HepG2 (cell line): ENCODE measurements at regions of chr12 and their contacts with region 1.

Region 1: GRCh38 chr12:85155787-85156186 is 119.6 kb downstream of the LRRIQ1 start:
- DNase-seq: peak; percentile 4
- ATAC-seq: no peak
- H3K4me3 ChIP-seq: no peak overlapping the region
- H3K27ac ChIP-seq: no peak overlapping the region
- H3K4me1 ChIP-seq: no peaks in the 10 kb centered on the region
- H3K27me3 ChIP-seq: no peaks in the 10 kb centered on the region
- CTCF ChIP-seq: no peak; the same call in 1 of the 2 replicates
- EP300 ChIP-seq: no peak
- POLR2A ChIP-seq: no peak
- RAD21 ChIP-seq: no peak

Region 2: GRCh38 chr12:85182699-85183098 is 26.9 kb after region 1 on chr12:
- CTCF ChIA-PET with region 1: no interaction called
- POLR2A ChIA-PET with region 1: no interaction called
- in situ Hi-C with region 1: no loop called
- intact Hi-C with region 1: no loop called
- DNase-seq: no peak
- ATAC-seq: no peak
- H3K4me3 ChIP-seq: no peak overlapping the region
- H3K27ac ChIP-seq: no peak overlapping the region
- H3K4me1 ChIP-seq: no peaks in the 10 kb centered on the region
- H3K27me3 ChIP-seq: no peaks in the 10 kb centered on the region; a peak in 1 of 5 replicates
- CTCF ChIP-seq: no peak
- EP300 ChIP-seq: no peak
- POLR2A ChIP-seq: no peak
- RAD21 ChIP-seq: no peak

Region 3: GRCh38 chr12:85413266-85413665 is 257.5 kb after region 1 on chr12:
- CTCF ChIA-PET with region 1: no interaction called
- POLR2A ChIA-PET with region 1: no interaction called
- in situ Hi-C with region 1: no loop called
- intact Hi-C with region 1: no loop called
- DNase-seq: no peak
- ATAC-seq: no peak
- H3K4me3 ChIP-seq: no peak overlapping the region
- H3K27ac ChIP-seq: no peak overlapping the region
- H3K4me1 ChIP-seq: no peaks in the 10 kb centered on the region
- H3K27me3 ChIP-seq: no peaks in the 10 kb centered on the region
- CTCF ChIP-seq: no peak
- EP300 ChIP-seq: no peak
- POLR2A ChIP-seq: no peak
- RAD21 ChIP-seq: no peak

Region 4: DNA sequence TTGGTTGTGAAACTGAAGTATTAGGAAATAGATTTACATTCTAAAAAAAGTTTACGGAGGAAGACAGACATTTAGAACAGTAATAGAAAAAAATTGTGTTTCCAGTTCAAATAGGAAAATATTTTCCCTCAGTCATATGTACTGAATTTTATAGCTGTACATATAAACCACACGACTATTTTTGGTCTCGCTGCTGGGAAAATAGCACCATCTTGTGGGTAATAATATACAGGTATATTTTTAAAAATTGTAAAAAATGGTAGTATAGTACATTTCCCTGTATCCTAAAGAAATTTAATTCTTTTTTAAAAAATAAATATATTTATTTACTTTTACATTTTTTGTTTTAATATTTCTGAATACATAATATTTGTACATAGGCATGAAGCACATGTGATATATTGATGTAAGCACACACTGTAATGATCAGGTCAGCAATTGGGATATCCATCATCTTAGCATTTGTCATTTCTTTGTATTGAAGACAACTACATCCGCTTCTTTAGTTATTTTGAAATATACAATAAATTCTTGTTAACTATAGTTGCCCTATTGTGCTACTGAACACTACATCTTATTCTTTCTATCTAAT is 292.9 kb after region 1 on chr12:
- CTCF ChIA-PET with region 1: interaction called, 4 read pairs
- POLR2A ChIA-PET with region 1: no interaction called
- in situ Hi-C with region 1: no loop called
- intact Hi-C with region 1: loop called (anchors 2 kb)
- DNase-seq: no peak
- ATAC-seq: no peak
- H3K4me3 ChIP-seq: no peak overlapping the region
- H3K27ac ChIP-seq: no peak overlapping the region
- H3K4me1 ChIP-seq: no peaks in the 10 kb centered on the region
- H3K27me3 ChIP-seq: no peaks in the 10 kb centered on the region
- CTCF ChIP-seq: no peak
- EP300 ChIP-seq: no peak
- POLR2A ChIP-seq: no peak
- RAD21 ChIP-seq: no peak